ENCODE measurements at regions of chr11 and their contacts with region 1.

Region 1: DNA sequence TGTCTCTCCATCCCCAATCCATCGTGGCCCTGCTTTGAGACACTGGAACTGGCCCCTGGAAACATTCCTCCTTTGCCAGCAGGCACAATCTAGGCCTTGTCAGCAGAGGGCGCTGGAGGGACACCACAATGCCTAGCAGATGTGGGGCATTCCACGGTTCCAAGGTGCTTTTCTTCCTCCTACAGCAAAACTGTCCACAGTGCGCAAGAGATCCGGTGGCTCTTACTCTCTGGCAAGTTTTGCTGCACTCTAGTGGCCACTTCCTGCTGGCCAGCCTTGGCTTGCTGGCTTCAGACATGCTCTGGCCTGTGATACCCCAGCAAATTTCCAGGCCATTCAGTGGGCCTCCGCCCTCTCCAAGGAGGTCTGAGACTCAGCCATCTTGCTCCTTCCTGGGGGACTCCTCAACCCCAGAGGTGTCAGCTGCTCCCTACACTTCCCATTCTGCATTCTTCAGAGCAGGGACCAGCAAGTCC is 17.1 kb upstream of the RBM4B start:
- DNase-seq: peak; percentile 83
- ATAC-seq: peak; percentile 87
- H3K4me3 Mint-ChIP-seq: no peak overlapping the region
- H3K27ac Mint-ChIP-seq: no peak overlapping the region
- H3K4me1 Mint-ChIP-seq: no peaks in the 10 kb centered on the region
- H3K27me3 Mint-ChIP-seq: no peaks in the 10 kb centered on the region

Region 2: DNA sequence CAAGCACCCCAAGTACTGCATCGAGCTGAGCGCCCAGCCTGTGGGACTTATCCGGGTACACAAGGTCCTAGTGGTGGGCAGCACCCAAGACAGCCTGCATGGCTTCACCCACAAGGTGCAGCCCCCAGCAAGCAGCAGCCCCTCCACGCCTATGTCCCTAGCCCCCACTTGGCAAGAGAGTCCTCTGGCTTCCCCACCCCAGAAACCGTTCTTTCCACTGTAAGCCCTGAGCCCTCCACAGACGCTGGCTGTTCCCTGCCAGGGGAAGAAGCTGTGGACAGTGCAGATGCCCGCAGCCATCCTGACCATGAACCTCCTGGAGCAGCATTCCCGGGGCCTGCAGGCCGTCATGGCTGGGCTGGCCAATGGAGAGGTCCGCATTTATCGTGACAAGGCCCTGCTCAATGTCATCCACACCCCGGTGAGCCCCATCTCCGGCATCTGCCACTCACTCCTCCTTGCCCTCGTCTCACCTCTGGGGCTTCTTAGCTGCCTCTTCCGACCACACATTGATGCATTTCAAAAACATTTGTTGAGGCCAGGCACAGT is 171.2 kb before region 1 on chr11:
- CTCF ChIA-PET with region 1: no interaction called
- POLR2A ChIA-PET with region 1: no interaction called
- DNase-seq: no peak
- ATAC-seq: no peak
- H3K4me3 Mint-ChIP-seq: no peak overlapping the region
- H3K27ac Mint-ChIP-seq: no peak overlapping the region
- H3K4me1 Mint-ChIP-seq: no peaks in the 10 kb centered on the region
- H3K27me3 Mint-ChIP-seq: no peaks in the 10 kb centered on the region

Region 3: GRCh38 chr11:66834501-66834845 is 139.7 kb after region 1 on chr11:
- CTCF ChIA-PET with region 1: interaction called, 30 read pairs
- POLR2A ChIA-PET with region 1: no interaction called
- DNase-seq: no peak
- ATAC-seq: no peak
- H3K4me3 Mint-ChIP-seq: no peak overlapping the region
- H3K27ac Mint-ChIP-seq: no peak overlapping the region
- H3K4me1 Mint-ChIP-seq: peaks cover 7% of the 10 kb centered on the region
- H3K27me3 Mint-ChIP-seq: no peaks in the 10 kb centered on the region

Region 4: GRCh38 chr11:66883016-66883968 is 188.5 kb after region 1 on chr11:
- CTCF ChIA-PET with region 1: interaction called, 11 read pairs
- POLR2A ChIA-PET with region 1: no interaction called
- DNase-seq: peak; percentile 73
- ATAC-seq: peak; percentile 76
- H3K4me3 Mint-ChIP-seq: no peak overlapping the region
- H3K27ac Mint-ChIP-seq: no peak overlapping the region
- H3K4me1 Mint-ChIP-seq: peaks cover 18% of the 10 kb centered on the region
- H3K27me3 Mint-ChIP-seq: no peaks in the 10 kb centered on the region